Endothelial cell of umbilical vein (primary cell): ENCODE measurements at regions of chr19 and their contacts with region 1.

Region 1: GRCh38 chr19:7868676-7869452 is 5.3 kb downstream of the PRR36 start:
- DNase-seq: peak; percentile 65
- H3K4me3 ChIP-seq: peak overlapping the region in 1 of 3 experiments; percentile 14
- H3K27ac ChIP-seq: no peak overlapping the region
- H3K4me1 ChIP-seq: peaks cover 7% of the 10 kb centered on the region
- H3K27me3 ChIP-seq: peaks cover 21 to 24% of the 10 kb centered on the region in 2 experiments
- CTCF ChIP-seq: peak; percentile 66 to 84
- POLR2A ChIP-seq: no peak

Region 2: DNA sequence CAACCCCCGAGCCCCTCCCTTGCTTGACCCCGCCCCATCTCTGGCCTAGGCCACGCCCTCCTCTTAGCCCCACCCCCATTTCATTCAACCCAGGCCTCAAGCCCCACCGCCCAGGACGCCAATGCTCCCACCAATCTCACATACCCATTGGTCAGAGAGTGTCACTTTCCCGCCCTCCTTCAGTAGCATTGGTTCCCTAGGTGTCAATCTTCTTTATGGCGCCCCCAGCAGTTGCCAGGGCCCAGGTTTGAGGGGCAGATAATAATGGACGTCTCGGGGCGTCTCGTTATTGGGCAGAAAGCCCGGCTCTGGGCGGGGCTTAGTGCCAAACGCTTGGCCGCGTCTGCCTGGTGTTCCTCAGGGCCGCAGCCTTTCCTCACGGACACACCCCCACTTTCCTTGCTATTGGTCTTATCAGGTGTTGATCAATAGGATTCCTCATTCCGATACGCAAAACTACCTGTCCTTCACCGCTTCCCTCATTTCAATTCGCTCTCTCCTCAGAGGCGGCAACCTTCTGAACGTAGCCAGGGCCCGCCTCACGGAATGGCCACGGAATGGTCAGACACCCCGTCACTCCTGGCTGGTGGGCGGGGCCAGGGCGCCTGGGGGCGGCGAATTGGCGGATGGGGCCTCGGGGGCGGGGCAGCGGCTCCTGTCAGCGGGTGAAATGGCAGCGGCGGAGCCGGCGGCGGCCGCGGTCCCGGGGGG is 39.1 kb before region 1 on chr19 and contains the start of gene EVI5L:
- CTCF ChIA-PET with region 1: interaction called, 8 read pairs
- POLR2A ChIA-PET with region 1: no interaction called
- dilution Hi-C with region 1: no loop called
- intact Hi-C with region 1: loop called (anchors 5 kb)
- DNase-seq: peak; percentile 100
- H3K4me3 ChIP-seq: peak within 1 kb of the TSS; percentile 35 to 89 (median 55)
- H3K27ac ChIP-seq: peak within 1 kb of the TSS; percentile 13
- H3K4me1 ChIP-seq: peaks cover 11% of the 10 kb centered on the region
- H3K27me3 ChIP-seq: peaks cover 0 to 3% of the 10 kb centered on the region in 2 experiments
- CTCF ChIP-seq: no peak
- POLR2A ChIP-seq: no peak
- total RNA-seq, gene EVI5L: 13.5 and 18.3 TPM in 2 replicates

Region 3: DNA sequence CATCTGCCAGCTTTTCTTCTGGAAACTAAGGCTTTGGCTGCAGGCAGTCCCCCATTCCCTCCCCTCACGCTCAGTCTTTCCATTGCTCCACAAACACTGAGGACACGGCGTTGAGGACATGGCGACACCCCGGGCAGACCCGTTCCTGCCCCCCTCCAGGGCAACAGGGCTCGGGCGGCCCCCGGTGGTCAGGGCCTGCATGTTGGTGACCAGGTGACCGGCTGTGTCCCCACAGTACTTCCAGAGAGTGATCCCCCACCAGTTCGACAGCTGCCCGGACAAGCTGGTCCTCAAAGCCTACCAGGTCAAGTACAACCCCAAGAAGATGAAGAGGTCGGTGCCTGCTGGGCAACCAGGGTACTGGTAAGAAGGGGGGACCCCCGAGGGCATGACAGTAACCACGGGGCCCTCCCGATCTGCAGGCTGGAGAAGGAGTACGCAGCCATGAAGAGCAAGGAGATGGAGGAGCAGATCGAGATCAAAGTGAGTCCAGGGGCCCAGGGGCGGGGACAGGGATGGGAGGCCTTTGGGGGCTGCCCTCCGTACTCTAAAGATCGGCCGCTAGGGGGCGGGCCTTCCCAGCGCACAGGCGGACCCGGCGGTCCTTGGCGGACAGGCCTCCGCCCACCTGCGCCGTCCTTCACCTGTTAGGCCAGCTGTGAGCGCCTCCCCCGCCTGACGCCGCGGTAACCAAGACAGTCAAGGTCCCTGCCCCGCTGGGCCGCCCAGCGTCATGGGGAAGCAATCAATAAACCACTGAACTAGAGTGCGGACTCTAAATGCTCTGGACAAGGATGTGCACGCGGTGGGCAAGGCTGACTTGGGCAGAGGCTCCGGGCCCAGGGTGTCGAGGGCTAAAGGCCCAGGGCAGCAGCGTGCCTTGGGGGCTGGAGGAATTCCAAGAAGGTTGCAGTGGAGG is 15.8 kb before region 1 on chr19:
- CTCF ChIA-PET with region 1: interaction called, 11 read pairs
- POLR2A ChIA-PET with region 1: no interaction called
- dilution Hi-C with region 1: no loop called
- intact Hi-C with region 1: no loop called
- DNase-seq: peak; percentile 49
- H3K4me3 ChIP-seq: no peak overlapping the region
- H3K27ac ChIP-seq: no peak overlapping the region
- H3K4me1 ChIP-seq: no peaks in the 10 kb centered on the region
- H3K27me3 ChIP-seq: no peaks in the 10 kb centered on the region
- CTCF ChIP-seq: peak; percentile 63 to 92
- POLR2A ChIP-seq: no peak

Region 4: GRCh38 chr19:7888145-7888825 is 19.4 kb after region 1 on chr19 and contains the start of gene LRRC8E:
- CTCF ChIA-PET with region 1: interaction called, 20 read pairs
- POLR2A ChIA-PET with region 1: no interaction called
- dilution Hi-C with region 1: no loop called
- intact Hi-C with region 1: no loop called
- DNase-seq: peak; percentile 33
- H3K4me3 ChIP-seq: peak within 1 kb of the TSS; percentile 31 to 43 (median 42)
- H3K27ac ChIP-seq: peak within 1 kb of the TSS; percentile 22
- H3K4me1 ChIP-seq: peaks cover 8% of the 10 kb centered on the region
- H3K27me3 ChIP-seq: no peaks in the 10 kb centered on the region
- CTCF ChIP-seq: no peak
- POLR2A ChIP-seq: no peak
- total RNA-seq, gene LRRC8E: 1.6 and 1.8 TPM in 2 replicates

Region 5: GRCh38 chr19:7903244-7904073 is 34.6 kb after region 1 on chr19 and contains the start of gene MAP2K7:
- CTCF ChIA-PET with region 1: interaction called, 17 read pairs
- POLR2A ChIA-PET with region 1: no interaction called
- dilution Hi-C with region 1: no loop called
- intact Hi-C with region 1: loop called (anchors 1 kb)
- DNase-seq: peak; percentile 100
- H3K4me3 ChIP-seq: peak within 1 kb of the TSS; percentile 62 to 93 (median 71)
- H3K27ac ChIP-seq: peak within 1 kb of the TSS; percentile 62
- H3K4me1 ChIP-seq: peaks cover 16% of the 10 kb centered on the region
- H3K27me3 ChIP-seq: no peaks in the 10 kb centered on the region
- CTCF ChIP-seq: peak; percentile 64 to 67
- POLR2A ChIP-seq: peak; percentile 98
- total RNA-seq, gene MAP2K7: 31.6 and 36.0 TPM in 2 replicates

Region 6: GRCh38 chr19:7919610-7920518 is 51.0 kb after region 1 on chr19 and contains the start of gene SNAPC2:
- CTCF ChIA-PET with region 1: interaction called, 27 read pairs
- POLR2A ChIA-PET with region 1: no interaction called
- dilution Hi-C with region 1: no loop called
- intact Hi-C with region 1: loop called (anchors 2 kb)
- DNase-seq: peak; percentile 94
- H3K4me3 ChIP-seq: peak within 1 kb of the TSS; percentile 61 to 79 (median 63)
- H3K27ac ChIP-seq: peak within 1 kb of the TSS; percentile 13
- H3K4me1 ChIP-seq: peaks cover 22% of the 10 kb centered on the region
- H3K27me3 ChIP-seq: peaks cover 18 to 31% of the 10 kb centered on the region in 2 experiments
- CTCF ChIP-seq: no peak
- POLR2A ChIP-seq: peak; percentile 68
- total RNA-seq, gene SNAPC2: 23.7 and 29.2 TPM in 2 replicates

Region 7: DNA sequence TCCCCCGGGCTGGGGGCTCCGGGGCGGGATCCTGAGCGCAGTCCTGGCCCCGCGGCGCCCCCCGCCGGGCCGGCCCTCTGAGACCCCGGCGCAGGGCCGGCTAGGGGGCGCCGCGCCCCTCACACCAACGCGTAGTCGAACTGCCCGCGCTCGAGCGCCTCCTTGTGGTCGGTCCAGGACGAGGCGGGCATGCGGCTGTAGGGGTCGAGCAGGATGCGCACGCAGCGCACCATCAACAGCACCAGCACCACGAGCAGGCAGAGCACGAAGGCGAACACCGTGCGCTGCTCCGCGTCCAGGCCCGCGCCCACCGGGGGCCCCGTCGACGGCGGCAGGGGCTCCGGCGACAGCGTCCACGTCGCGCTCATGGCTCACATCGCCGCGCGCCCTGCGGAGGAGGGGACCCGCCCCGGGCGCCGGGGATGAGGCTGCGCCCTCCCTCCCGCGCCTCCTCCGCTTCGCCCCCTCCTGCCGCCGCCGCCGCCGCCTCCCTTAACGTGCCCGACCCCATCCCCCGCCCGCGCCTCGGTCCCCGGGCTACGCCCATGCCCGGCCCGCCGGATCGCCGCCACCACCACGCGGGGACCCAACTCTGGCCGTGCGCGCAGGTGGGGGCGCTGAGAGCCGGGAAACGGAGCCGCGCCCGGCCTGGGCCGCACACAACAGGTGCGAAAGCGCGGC is 56.4 kb after region 1 on chr19:
- CTCF ChIA-PET with region 1: interaction called, 27 read pairs
- POLR2A ChIA-PET with region 1: no interaction called
- dilution Hi-C with region 1: no loop called
- intact Hi-C with region 1: loop called (anchors 2 kb)
- DNase-seq: peak; percentile 79
- H3K4me3 ChIP-seq: peak overlapping the region in 2 of 3 experiments; percentile 18 to 29
- H3K27ac ChIP-seq: no peak overlapping the region
- H3K4me1 ChIP-seq: peaks cover 28% of the 10 kb centered on the region
- H3K27me3 ChIP-seq: no peaks in the 10 kb centered on the region
- CTCF ChIP-seq: peak; percentile 95 to 96
- POLR2A ChIP-seq: no peak

Region 8: GRCh38 chr19:8451885-8452284 is 583.0 kb after region 1 on chr19:
- CTCF ChIA-PET with region 1: no interaction called
- POLR2A ChIA-PET with region 1: no interaction called
- dilution Hi-C with region 1: no loop called
- intact Hi-C with region 1: no loop called
- DNase-seq: no peak
- H3K4me3 ChIP-seq: no peak overlapping the region
- H3K27ac ChIP-seq: no peak overlapping the region
- H3K4me1 ChIP-seq: peaks cover 31% of the 10 kb centered on the region
- H3K27me3 ChIP-seq: no peaks in the 10 kb centered on the region
- CTCF ChIP-seq: no peak
- POLR2A ChIP-seq: no peak